ENCODE measurements at regions of chr1 and their contacts with region 1.

Region 1: DNA sequence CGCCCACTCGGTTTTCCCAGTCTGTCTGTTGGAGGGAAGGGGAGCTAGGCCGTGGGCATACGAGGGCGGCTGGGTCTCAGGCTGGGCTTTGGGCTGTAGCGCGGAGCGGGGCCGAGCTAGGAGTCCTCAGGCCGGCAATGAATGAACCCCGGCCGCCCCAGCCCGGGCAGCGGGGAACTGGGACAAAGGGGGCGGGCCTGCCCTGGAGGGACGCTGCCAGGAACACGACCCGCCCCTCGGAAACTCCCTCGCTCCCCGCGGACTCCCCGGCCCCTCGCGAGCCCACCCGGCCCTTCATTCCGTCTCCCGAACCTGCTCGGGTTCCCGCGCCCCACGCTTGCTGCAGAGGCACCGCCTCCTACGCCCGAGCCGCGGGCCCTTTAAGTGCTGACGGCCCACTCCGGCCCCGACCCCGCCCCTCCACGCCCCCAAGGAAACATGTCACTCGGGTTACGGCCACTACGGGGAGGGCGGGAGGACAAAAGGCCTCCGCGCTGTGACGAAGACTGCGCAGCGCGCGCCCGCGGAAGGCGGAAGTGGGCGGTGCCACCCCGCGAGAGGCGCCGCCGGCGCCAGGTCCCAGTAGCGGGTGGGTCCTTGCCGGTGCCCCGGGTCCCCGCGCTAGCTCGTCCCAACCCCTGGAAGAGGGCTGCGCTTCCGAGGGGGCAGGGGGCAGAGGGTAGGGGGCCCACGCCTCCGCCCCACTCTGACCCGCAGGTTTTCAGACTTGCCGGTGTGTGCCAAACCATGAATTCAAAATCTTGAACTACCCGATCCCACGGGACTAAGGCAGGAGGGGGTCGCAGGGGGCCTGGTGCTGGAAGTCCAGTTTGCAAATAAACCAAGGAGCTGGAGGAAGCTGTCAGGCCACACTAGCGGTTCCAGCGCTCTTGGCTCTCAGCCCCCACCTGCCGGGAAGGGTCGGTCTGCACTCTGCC is at the start of gene GALE:
- DNase-seq: peak in 1 of 2 experiments; percentile 84
- H3K4me3 ChIP-seq: peak within 1 kb of the TSS; percentile 57 to 81 (median 70)
- H3K27ac ChIP-seq: no peak within 1 kb of the TSS
- H3K4me1 ChIP-seq: peaks cover 0 to 12% (median 9%) of the 10 kb centered on the region in 4 experiments; a peak in 5 of 7 replicates
- H3K27me3 ChIP-seq: no peaks in the 10 kb centered on the region; a peak in 1 of 7 replicates
- CTCF ChIP-seq: no peak
- EP300 ChIP-seq: peak in 1 of 2 experiments; percentile 58; a peak in 1 of 3 replicates
- POLR2A ChIP-seq: no peak
- RAD21 ChIP-seq: no peak
- total RNA-seq, gene GALE: 26.0 and 29.9 TPM in 2 replicates

Region 2: GRCh38 chr1:23772049-23772853 is 28.4 kb before region 1 on chr1:
- CTCF ChIA-PET with region 1: interaction called, 37 read pairs
- POLR2A ChIA-PET with region 1: interaction called, 192 read pairs
- DNase-seq: peak in 1 of 2 experiments; percentile 97
- H3K4me3 ChIP-seq: no peak overlapping the region
- H3K27ac ChIP-seq: no peak overlapping the region
- H3K4me1 ChIP-seq: no peaks in the 10 kb centered on the region
- H3K27me3 ChIP-seq: no peaks in the 10 kb centered on the region
- CTCF ChIP-seq: peak; percentile 89 to 99 (median 98)
- EP300 ChIP-seq: no peak
- POLR2A ChIP-seq: no peak
- RAD21 ChIP-seq: peak; percentile 78 to 85

Region 3: DNA sequence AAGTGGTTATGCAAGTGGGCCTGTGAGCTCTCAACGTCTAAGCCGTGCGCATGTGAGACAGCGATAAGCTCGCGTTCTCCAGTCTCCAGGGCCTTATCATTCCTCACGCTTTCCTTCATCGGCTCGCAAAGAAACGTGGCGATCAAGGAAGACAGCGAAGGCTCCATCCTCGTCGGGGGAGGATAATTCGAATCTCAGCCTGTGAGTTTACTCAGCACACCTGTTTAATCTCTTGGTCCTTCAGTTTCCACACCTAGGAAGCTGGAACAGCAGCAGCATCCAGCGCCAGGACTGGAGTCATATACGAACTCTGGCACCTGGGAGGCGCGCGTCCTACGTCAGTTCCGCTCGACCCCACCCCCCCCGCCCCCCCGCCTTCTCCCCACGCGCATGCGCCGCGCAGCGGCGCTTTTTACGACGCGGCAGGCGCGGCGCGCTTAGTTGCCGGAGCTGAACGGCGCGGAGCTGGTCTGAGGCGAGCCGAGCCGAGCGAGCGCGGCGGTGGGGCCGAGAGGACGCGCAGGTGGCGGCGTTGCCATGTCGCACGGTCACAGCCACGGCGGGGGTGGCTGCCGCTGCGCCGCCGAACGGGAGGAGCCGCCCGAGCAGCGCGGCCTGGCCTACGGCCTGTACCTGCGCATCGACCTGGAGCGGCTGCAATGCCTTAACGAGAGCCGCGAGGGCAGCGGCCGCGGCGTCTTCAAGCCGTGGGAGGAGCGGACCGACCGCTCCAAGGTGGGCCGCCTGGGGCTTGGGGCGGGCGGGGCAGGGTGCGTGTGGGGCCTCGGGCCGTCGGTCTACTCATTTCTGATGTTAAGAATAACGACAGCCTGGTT is 22.5 kb before region 1 on chr1 and contains the start of gene PITHD1:
- CTCF ChIA-PET with region 1: interaction called, 6 read pairs
- POLR2A ChIA-PET with region 1: interaction called, 192 read pairs
- DNase-seq: peak in 1 of 2 experiments; percentile 77
- H3K4me3 ChIP-seq: peak within 1 kb of the TSS; percentile 83 to 99 (median 91)
- H3K27ac ChIP-seq: peak within 1 kb of the TSS; percentile 75
- H3K4me1 ChIP-seq: peaks cover 0 to 5% (median 3%) of the 10 kb centered on the region in 4 experiments; a peak in 3 of 7 replicates
- H3K27me3 ChIP-seq: no peaks in the 10 kb centered on the region
- CTCF ChIP-seq: no peak
- EP300 ChIP-seq: no peak
- POLR2A ChIP-seq: peak in 1 of 2 experiments; percentile 79; a peak in 2 of 3 replicates
- RAD21 ChIP-seq: no peak
- total RNA-seq, gene PITHD1: 65.0 and 68.8 TPM in 2 replicates

Region 4: GRCh38 chr1:23816906-23817305 is 16.2 kb after region 1 on chr1:
- CTCF ChIA-PET with region 1: interaction called, 66 read pairs
- POLR2A ChIA-PET with region 1: interaction called, 6 read pairs
- DNase-seq: no peak
- H3K4me3 ChIP-seq: no peak overlapping the region
- H3K27ac ChIP-seq: no peak overlapping the region
- H3K4me1 ChIP-seq: no peaks in the 10 kb centered on the region
- H3K27me3 ChIP-seq: no peaks in the 10 kb centered on the region
- CTCF ChIP-seq: no peak
- EP300 ChIP-seq: no peak
- POLR2A ChIP-seq: no peak
- RAD21 ChIP-seq: no peak

Region 5: DNA sequence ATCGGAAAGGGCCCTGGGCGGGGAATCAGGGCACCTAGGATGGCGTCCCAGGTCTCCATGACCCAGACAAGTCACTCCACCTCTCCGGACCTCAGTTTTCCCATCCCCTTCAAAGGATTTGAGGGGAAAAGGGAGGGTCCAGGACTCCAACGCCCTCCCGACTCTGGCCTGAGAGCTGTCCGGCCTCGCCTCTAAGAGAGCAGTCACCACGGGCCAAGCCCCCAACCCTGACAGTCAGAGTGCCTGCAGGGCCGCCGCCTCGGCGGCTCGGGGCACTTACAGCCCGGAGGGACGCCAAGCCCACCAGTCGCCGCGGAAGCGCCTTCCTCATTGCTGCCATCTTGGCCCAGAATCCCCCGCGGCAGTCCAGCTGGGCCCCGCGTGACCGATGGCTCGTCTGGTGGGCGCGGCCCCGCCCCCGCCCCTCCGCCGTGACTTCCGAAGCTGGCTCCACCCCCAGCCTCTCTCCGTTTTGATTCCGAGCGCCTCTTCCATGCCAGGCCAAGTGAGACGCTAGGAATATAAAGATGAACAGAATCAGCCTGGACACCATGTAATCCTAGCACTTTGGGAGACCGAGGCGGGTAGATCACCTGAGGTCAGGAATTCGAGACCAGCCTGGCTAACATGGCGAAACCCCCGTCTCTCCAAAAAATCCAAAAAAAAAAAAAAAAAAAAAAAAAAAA is 24.6 kb after region 1 on chr1 and contains the start of gene HMGCL:
- CTCF ChIA-PET with region 1: interaction called, 13 read pairs
- POLR2A ChIA-PET with region 1: interaction called, 28 read pairs
- DNase-seq: peak in 1 of 2 experiments; percentile 92
- H3K4me3 ChIP-seq: peak within 1 kb of the TSS; percentile 90 to 96 (median 94)
- H3K27ac ChIP-seq: peak within 1 kb of the TSS; percentile 96
- H3K4me1 ChIP-seq: peaks cover 0 to 6% (median 1%) of the 10 kb centered on the region in 4 experiments; a peak in 2 of 7 replicates
- H3K27me3 ChIP-seq: no peaks in the 10 kb centered on the region
- CTCF ChIP-seq: no peak
- EP300 ChIP-seq: no peak
- POLR2A ChIP-seq: peak; percentile 94 to 96
- RAD21 ChIP-seq: no peak
- total RNA-seq, gene HMGCL: 13.7 and 15.6 TPM in 2 replicates

Region 6: DNA sequence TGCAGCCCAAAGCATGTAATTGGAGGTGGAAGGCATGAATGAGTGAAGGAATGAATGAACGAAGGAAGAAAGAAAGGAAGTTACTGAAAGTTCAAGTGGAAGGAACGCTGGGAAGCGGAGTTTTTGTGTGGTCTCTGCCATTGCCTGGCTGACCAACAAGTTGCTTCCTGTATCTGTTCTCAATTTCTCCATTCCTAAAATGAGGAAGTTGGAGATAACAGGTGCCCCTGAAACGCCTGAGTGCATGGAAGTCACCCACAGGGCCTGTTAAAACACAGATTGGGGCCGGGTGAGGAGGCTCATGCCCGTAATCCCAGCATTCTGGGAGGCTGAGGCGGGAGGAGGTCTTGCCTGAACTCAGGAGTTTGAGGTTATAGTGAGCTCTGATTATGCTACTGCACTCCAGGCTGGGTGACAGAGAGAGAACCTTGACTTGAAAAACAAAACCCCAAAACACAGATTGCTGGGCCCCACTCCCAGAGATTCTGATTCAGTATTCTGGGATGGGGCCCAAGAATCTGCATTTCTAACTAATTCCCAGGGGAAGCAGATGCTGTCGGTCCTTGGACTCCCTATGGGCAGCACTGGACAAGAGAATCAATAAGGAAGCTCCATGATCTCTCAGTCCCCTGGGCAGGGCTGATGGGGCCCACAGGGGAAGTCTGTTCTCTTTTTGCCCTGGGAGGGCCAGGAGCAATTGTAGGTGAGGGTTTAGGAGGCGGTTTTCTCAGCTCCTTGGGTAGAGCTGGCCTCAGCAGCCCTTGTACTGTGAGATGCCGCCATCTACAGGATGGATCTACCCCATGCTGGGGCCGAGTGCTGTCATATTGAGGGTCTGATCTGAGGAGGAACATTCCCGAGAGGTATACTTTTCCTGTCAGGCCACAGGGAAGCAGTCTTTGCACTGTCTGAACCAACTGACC is 115.8 kb after region 1 on chr1:
- CTCF ChIA-PET with region 1: interaction called, 17 read pairs
- POLR2A ChIA-PET with region 1: interaction called, 5 read pairs
- DNase-seq: peak; percentile 59 to 83
- H3K4me3 ChIP-seq: no peak overlapping the region
- H3K27ac ChIP-seq: no peak overlapping the region
- H3K4me1 ChIP-seq: peaks cover 0 to 2% (median 0%) of the 10 kb centered on the region in 4 experiments; a peak in 2 of 7 replicates
- H3K27me3 ChIP-seq: no peaks in the 10 kb centered on the region
- CTCF ChIP-seq: peak; percentile 67 to 74 (median 73)
- EP300 ChIP-seq: no peak
- POLR2A ChIP-seq: no peak
- RAD21 ChIP-seq: peak; percentile 84 to 88